ENCODE measurements at regions of chr9 and their contacts with region 1.

Region 1: DNA sequence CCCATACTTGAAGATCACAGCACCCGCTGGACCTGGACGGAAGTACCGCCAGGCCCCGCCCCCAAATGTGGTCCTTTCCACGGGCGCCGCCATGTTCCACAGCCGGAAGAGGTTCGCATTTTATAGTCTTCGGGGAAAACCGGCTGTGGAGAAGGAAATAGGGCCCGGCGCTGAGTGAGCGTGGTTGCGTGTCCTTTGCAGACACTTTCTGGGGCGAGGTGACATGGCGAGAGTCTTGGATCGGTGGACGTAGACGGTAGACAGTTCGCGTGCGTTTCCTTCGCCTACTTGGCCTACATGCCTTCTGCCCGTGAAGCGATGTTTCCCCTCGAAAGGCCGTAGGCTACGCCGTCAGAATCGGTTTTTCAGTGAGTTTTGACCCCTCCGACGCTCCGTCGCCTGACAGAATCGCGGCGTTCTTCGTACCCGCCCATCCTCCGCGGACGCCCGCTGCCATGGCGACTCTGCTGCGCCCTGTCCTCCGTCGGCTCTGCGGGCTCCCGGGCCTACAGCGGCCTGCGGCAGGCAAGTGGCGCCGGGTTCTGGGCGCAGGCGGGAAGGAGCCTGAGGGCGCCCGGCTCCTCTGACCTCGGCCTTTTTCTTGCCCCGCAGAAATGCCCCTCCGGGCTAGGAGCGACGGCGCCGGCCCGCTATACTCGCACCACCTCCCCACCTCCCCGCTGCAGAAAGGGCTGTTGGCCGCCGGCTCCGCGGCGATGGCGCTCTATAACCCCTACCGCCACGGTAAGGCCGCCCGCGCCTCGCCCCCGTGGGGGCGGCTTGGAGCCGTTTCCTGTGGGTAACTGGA is at the starts of genes COQ4 and TRUB2:
- DNase-seq: peak; percentile 83 to 97 (median 92)
- ATAC-seq: peak; percentile 86
- H3K4me3 ChIP-seq: peak within 1 kb of the TSS; percentile 88 to 89
- H3K4me3 Mint-ChIP-seq: peak within 1 kb of the TSS; percentile 95
- H3K27ac ChIP-seq: peak within 1 kb of the TSS; percentile 80 to 89
- H3K27ac Mint-ChIP-seq: peak within 1 kb of the TSS; percentile 96
- H3K4me1 ChIP-seq: peaks cover 17% of the 10 kb centered on the region
- H3K4me1 Mint-ChIP-seq: peaks cover 30% of the 10 kb centered on the region
- H3K27me3 ChIP-seq: no peaks in the 10 kb centered on the region
- H3K27me3 Mint-ChIP-seq: no peaks in the 10 kb centered on the region
- CTCF ChIP-seq: no peak
- total RNA-seq, gene COQ4: 18.2 to 20.1 TPM
- total RNA-seq, gene TRUB2: 9.8 to 12.9 TPM

Region 2: DNA sequence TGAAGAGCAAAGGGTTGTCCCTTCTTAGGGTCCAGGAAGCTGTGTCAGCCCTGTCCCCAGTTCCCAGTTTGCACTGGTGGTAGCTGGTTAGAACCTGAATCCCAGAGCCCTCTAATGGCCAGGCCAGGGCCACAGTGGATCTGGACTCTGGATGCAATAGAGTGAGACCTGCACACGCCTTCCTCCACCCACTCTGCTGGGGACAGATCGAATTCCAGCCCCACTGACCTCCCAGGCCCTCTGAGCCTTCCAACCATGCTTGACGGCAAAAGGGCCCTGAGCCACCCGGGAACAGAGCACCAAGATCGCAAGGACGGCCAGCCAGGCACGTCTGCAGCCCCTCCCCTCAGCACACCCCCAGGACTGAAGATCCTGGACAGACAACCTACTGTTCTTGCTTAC is 279.1 kb before region 1 on chr9:
- CTCF ChIA-PET with region 1: no interaction called
- POLR2A ChIA-PET with region 1: no interaction called
- intact Hi-C with region 1: no loop called
- DNase-seq: no peak
- ATAC-seq: no peak
- H3K4me3 ChIP-seq: no peak overlapping the region
- H3K4me3 Mint-ChIP-seq: no peak overlapping the region
- H3K27ac ChIP-seq: no peak overlapping the region
- H3K27ac Mint-ChIP-seq: no peak overlapping the region
- H3K4me1 ChIP-seq: no peaks in the 10 kb centered on the region
- H3K4me1 Mint-ChIP-seq: no peaks in the 10 kb centered on the region
- H3K27me3 ChIP-seq: no peaks in the 10 kb centered on the region
- H3K27me3 Mint-ChIP-seq: no peaks in the 10 kb centered on the region
- CTCF ChIP-seq: no peak

Region 3: GRCh38 chr9:128081056-128081455 is 241.6 kb before region 1 on chr9:
- CTCF ChIA-PET with region 1: no interaction called
- POLR2A ChIA-PET with region 1: no interaction called
- intact Hi-C with region 1: no loop called
- DNase-seq: no peak
- ATAC-seq: no peak
- H3K4me3 ChIP-seq: no peak overlapping the region
- H3K4me3 Mint-ChIP-seq: no peak overlapping the region
- H3K27ac ChIP-seq: peak overlapping the region in 1 of 2 experiments; percentile 19
- H3K27ac Mint-ChIP-seq: peak overlapping the region; percentile 46
- H3K4me1 ChIP-seq: peaks cover 19% of the 10 kb centered on the region
- H3K4me1 Mint-ChIP-seq: peaks cover 49% of the 10 kb centered on the region
- H3K27me3 ChIP-seq: no peaks in the 10 kb centered on the region
- H3K27me3 Mint-ChIP-seq: no peaks in the 10 kb centered on the region
- CTCF ChIP-seq: no peak

Region 4: DNA sequence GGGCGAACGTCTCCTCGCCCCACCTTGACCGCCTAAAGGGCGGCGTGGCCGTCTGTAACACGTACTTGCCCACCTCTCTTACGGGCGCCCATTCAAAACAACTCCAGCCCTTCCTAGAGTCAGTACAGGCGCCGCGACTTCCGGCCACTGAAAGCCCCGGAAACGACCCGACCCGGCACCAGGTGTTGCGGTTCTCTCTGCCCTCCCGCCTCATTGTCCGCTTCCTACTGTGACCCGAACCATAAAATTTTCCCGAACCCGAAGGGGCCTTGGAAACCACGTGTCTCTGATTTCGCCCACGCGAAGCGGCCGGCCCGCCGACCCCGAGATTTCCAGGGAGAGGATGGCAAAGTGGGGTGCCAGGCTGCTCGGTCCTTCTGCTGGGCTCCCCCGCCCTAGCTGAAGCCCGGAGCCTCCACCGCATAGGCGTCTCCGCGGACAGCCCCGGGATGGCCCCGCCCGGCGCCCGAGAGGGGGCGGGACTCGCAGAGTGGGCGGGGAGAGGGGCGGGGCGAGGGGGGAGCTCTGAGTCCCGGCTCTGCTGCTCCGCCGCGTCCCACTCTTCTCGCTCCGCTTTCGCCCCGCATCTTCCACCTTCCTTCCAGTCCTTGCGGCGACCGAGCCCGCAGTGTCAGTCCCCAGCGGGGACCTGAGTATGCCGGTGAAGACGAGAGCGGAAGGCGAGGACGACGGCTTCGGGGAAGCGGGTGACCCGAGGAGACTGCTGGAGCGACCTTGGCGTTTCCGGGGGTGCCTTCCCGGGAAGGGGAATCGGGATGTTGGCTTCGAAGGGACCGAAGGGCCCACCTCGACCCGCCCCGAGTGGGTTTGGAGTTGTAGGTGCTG is 194.4 kb before region 1 on chr9:
- CTCF ChIA-PET with region 1: no interaction called
- POLR2A ChIA-PET with region 1: no interaction called
- intact Hi-C with region 1: loop called (anchors 1 to 2 kb)
- DNase-seq: peak; percentile 69 to 95 (median 83)
- ATAC-seq: peak; percentile 81
- H3K4me3 ChIP-seq: peak overlapping the region; percentile 99 to 100
- H3K4me3 Mint-ChIP-seq: peak overlapping the region; percentile 99
- H3K27ac ChIP-seq: peak overlapping the region; percentile 99
- H3K27ac Mint-ChIP-seq: peak overlapping the region; percentile 99
- H3K4me1 ChIP-seq: peaks cover 31% of the 10 kb centered on the region
- H3K4me1 Mint-ChIP-seq: peaks cover 38% of the 10 kb centered on the region
- H3K27me3 ChIP-seq: no peaks in the 10 kb centered on the region
- H3K27me3 Mint-ChIP-seq: peaks cover 2% of the 10 kb centered on the region
- CTCF ChIP-seq: no peak

Region 5: GRCh38 chr9:128249908-128250838 is 72.4 kb before region 1 on chr9:
- CTCF ChIA-PET with region 1: no interaction called
- POLR2A ChIA-PET with region 1: no interaction called
- intact Hi-C with region 1: loop called (anchors 1 kb)
- DNase-seq: peak; percentile 95 to 100 (median 99)
- ATAC-seq: peak; percentile 95
- H3K4me3 ChIP-seq: peak overlapping the region; percentile 52 to 97
- H3K4me3 Mint-ChIP-seq: peak overlapping the region; percentile 86
- H3K27ac ChIP-seq: peak overlapping the region; percentile 52 to 86
- H3K27ac Mint-ChIP-seq: peak overlapping the region; percentile 97
- H3K4me1 ChIP-seq: peaks cover 22% of the 10 kb centered on the region
- H3K4me1 Mint-ChIP-seq: peaks cover 18% of the 10 kb centered on the region
- H3K27me3 ChIP-seq: no peaks in the 10 kb centered on the region
- H3K27me3 Mint-ChIP-seq: peaks cover 5% of the 10 kb centered on the region
- CTCF ChIP-seq: no peak

Region 6: GRCh38 chr9:128286440-128286839 is 36.2 kb before region 1 on chr9:
- CTCF ChIA-PET with region 1: no interaction called
- POLR2A ChIA-PET with region 1: no interaction called
- intact Hi-C with region 1: no loop called
- DNase-seq: no peak
- ATAC-seq: no peak
- H3K4me3 ChIP-seq: no peak overlapping the region
- H3K4me3 Mint-ChIP-seq: no peak overlapping the region
- H3K27ac ChIP-seq: no peak overlapping the region
- H3K27ac Mint-ChIP-seq: no peak overlapping the region
- H3K4me1 ChIP-seq: no peaks in the 10 kb centered on the region
- H3K4me1 Mint-ChIP-seq: no peaks in the 10 kb centered on the region
- H3K27me3 ChIP-seq: no peaks in the 10 kb centered on the region
- H3K27me3 Mint-ChIP-seq: no peaks in the 10 kb centered on the region
- CTCF ChIP-seq: no peak

Region 7: DNA sequence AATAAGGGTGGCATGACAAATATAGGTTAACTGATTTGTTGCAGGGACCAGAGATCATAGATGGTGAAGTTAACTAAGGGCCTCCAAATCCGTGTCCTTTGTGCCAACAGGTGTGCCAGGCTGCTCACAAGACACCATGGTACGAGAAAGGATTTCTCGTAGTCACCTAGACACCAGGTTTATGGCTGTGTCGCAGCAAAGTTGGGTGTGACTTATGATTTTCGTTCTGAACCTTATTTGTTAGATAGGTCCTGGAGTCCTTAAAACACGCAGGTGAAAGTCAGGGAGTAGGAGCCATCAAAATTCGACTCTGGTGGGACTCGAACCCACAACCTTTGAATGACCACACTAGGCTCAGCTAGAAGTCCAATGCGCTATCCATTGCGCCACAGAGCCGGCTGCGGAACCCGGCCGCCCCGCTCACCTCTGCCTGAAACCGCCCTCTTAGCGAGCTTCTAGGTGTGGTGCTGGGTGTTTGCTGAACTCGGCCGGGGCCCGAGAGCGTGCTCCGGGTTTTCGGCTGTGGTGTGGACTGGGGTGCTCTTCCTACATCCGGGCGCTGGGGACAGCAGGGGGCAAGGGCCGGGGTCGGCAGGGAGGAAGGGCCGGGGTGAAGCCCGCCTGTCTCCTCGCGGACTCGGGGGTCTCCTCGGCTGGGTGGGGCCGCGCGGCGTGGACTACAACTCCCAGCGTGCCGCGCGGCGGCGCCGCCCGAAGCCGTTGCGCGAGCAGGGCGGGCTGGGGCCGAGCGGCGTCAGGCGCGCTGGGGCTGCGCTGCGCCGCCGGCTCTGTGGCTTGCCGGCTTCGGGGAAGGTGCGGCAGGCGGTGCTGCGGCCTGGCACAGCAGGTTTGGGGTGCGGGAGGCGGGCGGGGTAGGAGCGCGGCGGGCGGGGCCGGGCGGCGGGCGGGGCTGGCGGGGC is 17.4 kb after region 1 on chr9 and contains the start of gene SLC27A4:
- CTCF ChIA-PET with region 1: interaction called, 7 read pairs
- POLR2A ChIA-PET with region 1: interaction called, 3 read pairs
- intact Hi-C with region 1: loop called (anchors 1 kb)
- DNase-seq: peak; percentile 52 to 92 (median 76)
- ATAC-seq: peak; percentile 92
- H3K4me3 ChIP-seq: peak within 1 kb of the TSS; percentile 73 to 83
- H3K4me3 Mint-ChIP-seq: peak within 1 kb of the TSS; percentile 96
- H3K27ac ChIP-seq: peak within 1 kb of the TSS; percentile 40 to 53
- H3K27ac Mint-ChIP-seq: peak within 1 kb of the TSS; percentile 85
- H3K4me1 ChIP-seq: peaks cover 14% of the 10 kb centered on the region
- H3K4me1 Mint-ChIP-seq: peaks cover 8% of the 10 kb centered on the region
- H3K27me3 ChIP-seq: no peaks in the 10 kb centered on the region
- H3K27me3 Mint-ChIP-seq: no peaks in the 10 kb centered on the region
- CTCF ChIP-seq: no peak
- total RNA-seq, gene SLC27A4: 2.2 to 2.4 TPM

Region 8: GRCh38 chr9:128370826-128371621 is 48.4 kb after region 1 on chr9 and contains the start of gene URM1:
- CTCF ChIA-PET with region 1: no interaction called
- POLR2A ChIA-PET with region 1: no interaction called
- intact Hi-C with region 1: loop called (anchors 1 kb)
- DNase-seq: peak; percentile 91 to 98 (median 96)
- ATAC-seq: peak; percentile 90
- H3K4me3 ChIP-seq: peak within 1 kb of the TSS; percentile 84 to 95
- H3K4me3 Mint-ChIP-seq: peak within 1 kb of the TSS; percentile 97
- H3K27ac ChIP-seq: peak within 1 kb of the TSS; percentile 76 to 96
- H3K27ac Mint-ChIP-seq: peak within 1 kb of the TSS; percentile 98
- H3K4me1 ChIP-seq: peaks cover 16% of the 10 kb centered on the region
- H3K4me1 Mint-ChIP-seq: peaks cover 43% of the 10 kb centered on the region
- H3K27me3 ChIP-seq: no peaks in the 10 kb centered on the region
- H3K27me3 Mint-ChIP-seq: no peaks in the 10 kb centered on the region
- CTCF ChIP-seq: no peak
- total RNA-seq, gene URM1: 30.4 to 31.5 TPM

Region 9: DNA sequence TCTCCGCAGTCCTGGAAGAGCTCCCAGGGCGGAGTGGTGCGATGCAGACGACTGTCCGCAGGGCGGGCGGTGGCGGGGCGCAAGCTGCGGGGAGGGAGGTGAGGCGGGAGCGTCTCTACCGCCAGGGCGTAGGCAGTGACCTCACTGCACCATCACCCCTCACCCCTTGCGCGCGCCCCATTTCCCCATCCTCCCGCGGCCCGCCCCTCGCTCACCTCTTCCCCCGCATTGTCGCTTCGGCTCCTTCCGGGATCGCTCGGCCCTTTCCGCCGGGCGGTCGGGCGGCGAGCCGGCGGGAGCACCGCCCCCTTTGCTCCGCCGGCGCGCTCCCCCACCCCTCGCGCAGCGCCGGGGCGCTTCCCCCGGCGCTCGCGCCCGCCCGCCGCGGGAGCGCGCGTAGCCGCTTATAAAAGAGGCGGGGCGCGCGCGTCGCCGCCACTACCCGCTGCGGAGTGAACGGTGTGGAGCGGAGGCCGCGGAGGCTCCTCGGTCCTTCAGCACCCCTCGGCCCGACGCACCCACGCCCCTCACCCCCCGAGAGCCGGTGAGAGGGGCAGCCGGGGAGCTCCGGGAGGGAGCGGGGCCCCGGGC is 229.6 kb after region 1 on chr9 and contains the start of gene SPTAN1:
- CTCF ChIA-PET with region 1: no interaction called
- POLR2A ChIA-PET with region 1: no interaction called
- intact Hi-C with region 1: loop called in 1 of 2 experiments (anchors 1 kb)
- DNase-seq: peak; percentile 91 to 97 (median 95)
- ATAC-seq: peak; percentile 85
- H3K4me3 ChIP-seq: peak within 1 kb of the TSS; percentile 85 to 95
- H3K4me3 Mint-ChIP-seq: no peak within 1 kb of the TSS
- H3K27ac ChIP-seq: peak within 1 kb of the TSS; percentile 92 to 93
- H3K27ac Mint-ChIP-seq: peak within 1 kb of the TSS; percentile 96
- H3K4me1 ChIP-seq: peaks cover 54% of the 10 kb centered on the region
- H3K4me1 Mint-ChIP-seq: peaks cover 24% of the 10 kb centered on the region
- H3K27me3 ChIP-seq: no peaks in the 10 kb centered on the region
- H3K27me3 Mint-ChIP-seq: no peaks in the 10 kb centered on the region
- CTCF ChIP-seq: no peak
- total RNA-seq, gene SPTAN1: 299 to 332 TPM

Region 10: GRCh38 chr9:129036241-129036922 is 713.8 kb after region 1 on chr9 and contains the start of gene MIGA2:
- CTCF ChIA-PET with region 1: no interaction called
- POLR2A ChIA-PET with region 1: no interaction called
- intact Hi-C with region 1: loop called in 1 of 2 experiments (anchors 2 kb)
- DNase-seq: peak; percentile 85 to 99 (median 94)
- ATAC-seq: peak; percentile 94
- H3K4me3 ChIP-seq: peak within 1 kb of the TSS; percentile 99
- H3K4me3 Mint-ChIP-seq: peak within 1 kb of the TSS; percentile 98
- H3K27ac ChIP-seq: peak within 1 kb of the TSS; percentile 68 to 83
- H3K27ac Mint-ChIP-seq: peak within 1 kb of the TSS; percentile 85
- H3K4me1 ChIP-seq: peaks cover 21% of the 10 kb centered on the region
- H3K4me1 Mint-ChIP-seq: peaks cover 36% of the 10 kb centered on the region
- H3K27me3 ChIP-seq: no peaks in the 10 kb centered on the region
- H3K27me3 Mint-ChIP-seq: no peaks in the 10 kb centered on the region
- CTCF ChIP-seq: no peak
- total RNA-seq, gene MIGA2: 63.5 to 69.0 TPM

Region 11: DNA sequence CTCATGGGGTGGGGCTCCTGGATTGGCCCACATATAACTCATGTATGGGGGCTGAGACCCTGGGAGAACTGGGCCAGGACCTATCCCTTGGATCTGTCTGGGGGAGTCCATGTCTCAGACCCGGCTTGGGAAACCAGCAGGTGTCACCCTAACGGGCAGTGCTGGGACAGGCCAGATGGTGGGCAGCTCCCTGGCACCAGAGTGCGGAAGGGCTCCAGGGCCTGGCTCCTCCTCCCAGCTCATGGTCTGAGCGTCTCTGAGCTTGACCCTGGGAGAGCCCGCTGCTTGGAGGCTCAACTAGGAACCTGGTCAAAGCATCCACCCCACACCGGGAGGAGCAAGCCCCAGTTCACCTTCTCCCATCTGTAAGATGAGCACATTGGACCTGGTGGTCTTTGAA is 1834.1 kb after region 1 on chr9:
- CTCF ChIA-PET with region 1: no interaction called
- POLR2A ChIA-PET with region 1: no interaction called
- intact Hi-C with region 1: no loop called
- DNase-seq: no peak
- ATAC-seq: no peak
- H3K4me3 ChIP-seq: no peak overlapping the region
- H3K4me3 Mint-ChIP-seq: no peak overlapping the region
- H3K27ac ChIP-seq: no peak overlapping the region
- H3K27ac Mint-ChIP-seq: no peak overlapping the region
- H3K4me1 ChIP-seq: no peaks in the 10 kb centered on the region
- H3K4me1 Mint-ChIP-seq: no peaks in the 10 kb centered on the region
- H3K27me3 ChIP-seq: no peaks in the 10 kb centered on the region
- H3K27me3 Mint-ChIP-seq: no peaks in the 10 kb centered on the region
- CTCF ChIP-seq: no peak